ENCODE measurements at regions of chr5 and their contacts with region 1.

Region 1: DNA sequence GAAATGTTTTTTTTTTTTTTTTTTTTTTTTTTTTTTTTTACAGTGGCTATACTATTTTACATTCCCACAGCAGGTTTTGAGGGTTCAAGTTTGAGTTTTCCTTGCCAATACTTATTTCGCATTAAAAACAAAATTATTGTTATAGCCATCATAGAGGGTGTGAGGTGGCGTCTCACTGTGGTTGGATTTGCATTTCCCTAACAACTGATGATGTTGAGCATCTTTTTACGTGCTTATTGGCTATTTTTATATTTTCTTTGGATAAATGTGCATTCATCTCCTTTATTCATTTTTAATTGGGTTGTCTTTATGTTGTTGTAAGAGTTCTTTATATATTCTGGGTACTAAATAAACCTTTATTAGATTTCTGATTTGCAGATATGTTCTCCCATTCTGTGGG is 18.9 kb upstream of the UBLCP1 start:
- DNase-seq: no peak
- H3K4me3 Mint-ChIP-seq: no peak overlapping the region
- H3K27ac Mint-ChIP-seq: no peak overlapping the region
- H3K4me1 Mint-ChIP-seq: peaks cover 12% of the 10 kb centered on the region
- H3K27me3 Mint-ChIP-seq: no peaks in the 10 kb centered on the region
- CTCF ChIP-seq: no peak

Region 2: DNA sequence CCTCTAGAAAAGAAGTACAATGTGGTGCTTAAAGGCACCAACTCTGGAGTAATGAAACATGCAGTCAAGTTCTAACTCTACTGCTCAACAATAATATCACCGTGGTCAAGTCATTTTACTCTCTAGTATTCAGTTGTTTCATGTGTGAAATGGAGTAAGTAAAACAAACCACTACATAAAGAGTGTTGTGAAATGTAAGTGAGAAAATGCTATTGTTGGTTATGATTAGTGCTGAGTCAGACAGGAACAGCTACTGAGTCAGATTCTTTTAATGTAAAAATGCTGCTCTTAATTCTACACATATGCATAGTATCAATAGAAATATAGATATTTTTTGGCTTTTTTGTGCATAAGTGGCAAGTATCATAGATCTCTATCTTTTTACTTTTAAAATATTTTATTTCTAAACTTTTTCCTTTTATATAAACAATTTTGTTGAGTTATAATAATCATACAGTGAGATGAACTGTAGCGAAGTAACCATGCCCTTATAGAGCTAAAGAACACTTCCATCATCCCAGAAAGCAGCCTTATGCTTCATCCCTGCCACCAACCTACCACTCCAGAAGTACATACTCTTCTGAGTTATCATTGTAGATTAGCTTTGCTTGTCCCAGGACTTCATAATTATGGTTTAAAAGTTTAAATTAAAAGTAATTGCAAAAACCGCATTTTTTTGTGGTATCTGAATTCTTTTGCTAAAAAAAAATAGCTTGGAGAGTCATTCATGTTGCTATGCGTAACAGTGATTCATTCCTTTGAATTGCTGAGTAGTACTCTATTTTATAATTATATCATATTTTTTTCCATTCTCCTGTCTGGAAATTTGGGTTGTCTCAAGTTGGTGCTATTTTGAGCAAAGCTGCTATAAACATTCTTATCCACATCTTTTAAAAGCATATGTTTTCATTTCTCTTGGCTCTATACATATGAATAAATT is 837.0 kb before region 1 on chr5:
- CTCF ChIA-PET with region 1: interaction called, 10 read pairs
- intact Hi-C with region 1: no loop called
- DNase-seq: no peak
- H3K4me3 Mint-ChIP-seq: no peak overlapping the region
- H3K27ac Mint-ChIP-seq: no peak overlapping the region
- H3K4me1 Mint-ChIP-seq: no peaks in the 10 kb centered on the region
- H3K27me3 Mint-ChIP-seq: no peaks in the 10 kb centered on the region
- CTCF ChIP-seq: no peak

Region 3: DNA sequence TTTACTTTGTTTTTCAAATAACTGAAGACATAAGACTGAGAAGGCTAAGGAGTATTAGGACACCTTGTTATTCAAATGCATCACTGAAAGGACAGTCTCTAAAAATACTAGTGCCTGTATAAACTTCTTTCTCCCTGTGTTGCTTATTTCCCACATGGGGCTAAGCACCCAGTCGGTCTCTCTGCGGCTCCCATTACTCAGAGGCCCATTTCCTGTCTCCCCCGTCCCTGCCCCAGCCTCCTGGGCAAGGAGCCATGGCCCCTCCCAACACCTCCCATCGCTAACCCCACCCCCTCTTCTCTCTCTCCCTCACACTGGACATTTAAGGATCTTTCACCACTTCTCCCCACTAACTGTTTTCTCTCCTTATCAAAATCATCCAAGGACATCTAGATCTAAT is 226.4 kb before region 1 on chr5:
- CTCF ChIA-PET with region 1: no interaction called
- intact Hi-C with region 1: no loop called
- DNase-seq: peak; percentile 54
- H3K4me3 Mint-ChIP-seq: no peak overlapping the region
- H3K27ac Mint-ChIP-seq: no peak overlapping the region
- H3K4me1 Mint-ChIP-seq: peaks cover 7% of the 10 kb centered on the region
- H3K27me3 Mint-ChIP-seq: no peaks in the 10 kb centered on the region
- CTCF ChIP-seq: no peak

Measured in Calu3 (cell line).